ENCODE measurements at regions of chr12 and their contacts with region 1.

Region 1: DNA sequence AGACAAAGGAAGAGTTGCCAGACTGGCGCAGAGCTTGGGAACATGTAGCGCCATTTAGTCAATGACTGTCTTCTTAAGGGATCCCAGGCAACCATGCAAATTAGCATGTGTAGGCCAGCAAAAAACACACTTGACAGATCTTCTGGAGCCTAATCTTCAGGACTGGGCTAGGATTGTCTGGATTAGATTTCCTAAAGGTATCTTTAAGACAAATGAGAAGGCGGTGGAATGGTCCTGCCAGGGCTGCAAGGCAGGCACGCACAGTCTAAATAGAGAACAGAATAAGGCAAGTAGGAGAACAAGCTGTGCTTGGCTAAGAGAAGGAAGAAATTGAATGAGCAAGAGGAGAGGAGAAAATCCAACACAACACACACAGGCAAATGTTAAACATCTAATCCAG is 80.0 kb downstream of the CIT start:
- DNase-seq: peak in 3 of 10 donors; percentile 44 to 67 (median 55)
- H3K4me3 ChIP-seq: peak overlapping the region in 5 of 59 donors; percentile 13 to 23 (median 21)
- H3K27ac ChIP-seq: peak overlapping the region in 35 of 59 donors; percentile 3 to 73 (median 39)
- H3K27me3 ChIP-seq: no peaks in the 10 kb centered on the region
- CTCF ChIP-seq: no peak

Region 2: GRCh38 chr12:119710352-119710964 is 86.6 kb before region 1 on chr12:
- intact Hi-C with region 1: loop called in 1 of 2 experiments (anchors 10 kb)
- DNase-seq: no peak
- H3K4me3 ChIP-seq: no peak overlapping the region
- H3K27ac ChIP-seq: peak overlapping the region in 58 of 59 donors; percentile 5 to 90 (median 72)
- H3K27me3 ChIP-seq: no peaks in the 10 kb centered on the region
- CTCF ChIP-seq: no peak

Region 3: GRCh38 chr12:119869720-119870119 is 72.6 kb after region 1 on chr12:
- intact Hi-C with region 1: no loop called
- DNase-seq: peak in 2 of 10 donors; percentile 9 to 57
- H3K4me3 ChIP-seq: no peak overlapping the region
- H3K27ac ChIP-seq: no peak overlapping the region
- H3K27me3 ChIP-seq: no peaks in the 10 kb centered on the region
- CTCF ChIP-seq: no peak

Measured in dorsolateral prefrontal cortex (tissue), 120 donors.